Caco-2 (cell line): ENCODE measurements at regions of chr13 and their contacts with region 1.

Region 1: DNA sequence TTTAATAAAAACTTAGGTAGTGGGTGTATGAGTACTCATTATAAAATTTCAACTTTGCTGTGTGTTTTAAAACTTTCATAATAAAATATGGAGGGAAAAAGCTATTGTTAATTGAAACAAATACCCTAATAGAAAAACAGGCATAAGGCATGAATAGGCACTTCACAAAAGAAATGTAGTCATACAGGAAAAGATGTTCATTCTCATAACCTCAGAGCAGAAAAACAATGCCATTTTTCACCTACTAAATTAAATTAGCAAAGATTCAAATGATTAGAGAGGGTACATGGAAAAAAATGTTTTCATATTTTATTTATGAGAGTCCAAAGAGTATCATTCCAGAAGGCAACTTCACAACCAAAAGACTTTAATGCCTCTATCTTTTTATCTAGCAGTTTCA is 20.6 kb upstream of the ELF1 start:
- DNase-seq: no peak
- H3K4me3 ChIP-seq: no peak overlapping the region
- H3K4me3 Mint-ChIP-seq: no peak overlapping the region
- H3K27ac Mint-ChIP-seq: no peak overlapping the region
- H3K4me1 ChIP-seq: no peaks in the 10 kb centered on the region
- H3K4me1 Mint-ChIP-seq: peaks cover 10% of the 10 kb centered on the region
- H3K27me3 ChIP-seq: no peaks in the 10 kb centered on the region
- H3K27me3 Mint-ChIP-seq: no peaks in the 10 kb centered on the region
- CTCF ChIP-seq: no peak

Region 2: DNA sequence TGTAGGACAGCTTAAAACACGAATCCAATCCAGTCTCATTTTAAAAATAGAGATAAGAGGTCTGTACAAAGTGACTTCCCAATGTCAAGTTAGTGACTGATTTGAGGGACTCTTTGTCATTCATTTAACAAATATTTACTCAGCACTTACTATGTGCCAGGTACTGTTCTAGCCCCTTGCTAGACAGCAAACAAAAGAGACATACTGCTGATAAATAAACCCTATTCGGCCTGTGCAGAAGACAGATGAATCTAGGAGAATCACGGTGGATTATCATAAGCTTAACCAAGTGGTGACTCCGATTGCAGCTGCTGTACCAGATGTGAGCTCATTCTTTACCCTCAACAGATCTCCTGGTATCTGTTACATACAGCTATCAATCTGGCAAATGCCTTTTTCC is 14.2 kb before region 1 on chr13:
- CTCF ChIA-PET with region 1: no interaction called
- POLR2A ChIA-PET with region 1: interaction called, 16 read pairs
- intact Hi-C with region 1: no loop called
- DNase-seq: peak in 1 of 2 experiments; percentile 17
- H3K4me3 ChIP-seq: no peak overlapping the region
- H3K4me3 Mint-ChIP-seq: peak overlapping the region; percentile 13
- H3K27ac Mint-ChIP-seq: peak overlapping the region; percentile 71
- H3K4me1 ChIP-seq: peaks cover 55% of the 10 kb centered on the region
- H3K4me1 Mint-ChIP-seq: peaks cover 33% of the 10 kb centered on the region
- H3K27me3 ChIP-seq: no peaks in the 10 kb centered on the region
- H3K27me3 Mint-ChIP-seq: no peaks in the 10 kb centered on the region
- CTCF ChIP-seq: no peak